Heart right ventricle (tissue), 16 donors: ENCODE measurements at regions of chr20 and their contacts with region 1.

Region 1: GRCh38 chr20:24917797-24918578 is 31.1 kb upstream of the CST7 start:
- DNase-seq: peak; percentile 51 to 66
- ATAC-seq: peak; percentile 76 to 92 (median 89)
- H3K4me3 ChIP-seq: peak overlapping the region in 1 of 10 donors; percentile 20
- H3K27ac ChIP-seq: peak overlapping the region in 1 of 10 donors; percentile 14
- H3K4me1 ChIP-seq: peaks cover 0 to 12% (median 7%) of the 10 kb centered on the region in 9 donors
- H3K27me3 ChIP-seq: peaks cover 0 to 11% (median 5%) of the 10 kb centered on the region in 7 donors
- CTCF ChIP-seq: peak; percentile 45 to 85 (median 80)

Region 2: DNA sequence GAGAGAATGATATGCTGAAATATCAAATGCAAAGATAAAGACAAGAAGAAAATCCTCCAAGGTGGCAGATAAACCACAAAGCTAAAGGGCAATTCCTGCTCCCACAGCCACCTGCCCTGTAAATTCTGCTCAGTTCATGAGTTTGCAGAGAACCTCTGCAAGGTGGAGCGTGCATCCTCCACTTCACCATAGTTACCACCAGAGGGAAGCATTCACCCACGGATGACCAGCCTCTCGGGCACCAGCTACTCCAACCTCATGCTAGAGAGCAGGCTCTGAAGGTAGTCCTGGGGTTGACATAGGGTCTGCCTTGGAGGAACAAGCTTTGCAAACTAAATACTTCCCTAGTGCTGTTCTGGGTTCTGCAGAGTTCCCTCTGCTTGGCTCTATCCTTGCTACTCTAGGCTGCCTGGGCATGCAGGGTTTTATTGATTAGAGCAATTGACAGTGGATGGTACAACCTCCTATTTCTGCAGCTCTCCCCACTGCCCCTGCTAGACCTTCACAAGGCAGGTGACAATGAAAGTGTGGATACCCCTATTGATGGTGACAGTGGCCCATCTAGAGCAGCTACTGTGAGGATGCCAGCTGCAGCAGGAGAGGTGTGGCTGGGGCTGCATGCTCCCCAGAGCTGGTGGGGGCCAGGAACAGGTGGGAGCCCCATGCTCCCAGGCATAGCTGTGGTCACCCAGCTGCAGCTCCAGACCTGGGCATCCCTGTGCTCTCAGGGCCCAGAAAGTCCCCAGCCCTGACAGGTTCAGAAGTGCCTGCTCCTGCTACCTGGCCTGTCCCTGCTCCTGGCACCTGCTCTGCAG is 980.5 kb before region 1 on chr20:
- intact Hi-C with region 1: loop called in 6 of 10 experiments (anchors 5 to 10 kb)
- DNase-seq: peak; percentile 20 to 45
- ATAC-seq: peak; percentile 88 to 97 (median 91)
- H3K4me3 ChIP-seq: no peak overlapping the region
- H3K27ac ChIP-seq: no peak overlapping the region
- H3K4me1 ChIP-seq: no peaks in the 10 kb centered on the region
- H3K27me3 ChIP-seq: peaks cover 0 to 20% (median 0%) of the 10 kb centered on the region in 7 donors
- CTCF ChIP-seq: peak; percentile 60 to 84 (median 78)

Region 3: DNA sequence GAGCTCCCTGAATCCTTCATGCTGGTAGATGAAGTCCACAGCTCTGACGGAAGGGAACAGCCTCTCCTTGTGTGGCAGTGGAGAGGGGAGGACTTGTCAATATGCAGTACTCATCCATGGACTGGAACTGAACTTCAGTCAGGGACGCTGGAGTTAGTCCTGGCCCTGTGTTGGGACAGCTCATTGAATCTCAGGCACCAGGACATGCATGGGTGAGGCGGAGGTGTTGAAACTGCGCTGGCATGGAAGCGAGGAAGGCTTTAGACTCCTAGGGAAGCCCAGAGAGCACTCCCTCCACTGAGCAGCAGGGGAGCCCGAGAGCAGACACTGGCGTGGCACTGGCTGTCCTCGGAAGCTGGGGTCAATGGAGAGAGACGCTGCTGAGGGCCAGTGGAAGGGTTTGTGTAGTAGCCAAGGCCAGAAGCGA is 768.1 kb before region 1 on chr20:
- intact Hi-C with region 1: loop called in 2 of 10 experiments (anchors 5 to 10 kb)
- DNase-seq: peak; percentile 12 to 48
- ATAC-seq: peak; percentile 50 to 92 (median 72)
- H3K4me3 ChIP-seq: no peak overlapping the region
- H3K27ac ChIP-seq: no peak overlapping the region
- H3K4me1 ChIP-seq: peaks cover 0 to 7% (median 0%) of the 10 kb centered on the region in 9 donors
- H3K27me3 ChIP-seq: no peaks in the 10 kb centered on the region
- CTCF ChIP-seq: peak in 8 of 9 donors; percentile 19 to 53 (median 48)

Region 4: GRCh38 chr20:24160563-24161375 is 757.2 kb before region 1 on chr20:
- intact Hi-C with region 1: loop called in 7 of 10 experiments (anchors 2 to 10 kb)
- DNase-seq: peak; percentile 22 to 38
- ATAC-seq: peak in 5 of 8 donors; percentile 53 to 76 (median 67)
- H3K4me3 ChIP-seq: no peak overlapping the region
- H3K27ac ChIP-seq: no peak overlapping the region
- H3K4me1 ChIP-seq: no peaks in the 10 kb centered on the region
- H3K27me3 ChIP-seq: peaks cover 0 to 6% (median 0%) of the 10 kb centered on the region in 7 donors
- CTCF ChIP-seq: peak; percentile 40 to 78 (median 72)

Region 5: GRCh38 chr20:24303381-24303780 is 614.6 kb before region 1 on chr20:
- intact Hi-C with region 1: loop called in 2 of 10 experiments (anchors 5 kb)
- DNase-seq: no peak
- ATAC-seq: no peak
- H3K4me3 ChIP-seq: no peak overlapping the region
- H3K27ac ChIP-seq: no peak overlapping the region
- H3K4me1 ChIP-seq: no peaks in the 10 kb centered on the region
- H3K27me3 ChIP-seq: peaks cover 0 to 28% (median 4%) of the 10 kb centered on the region in 7 donors
- CTCF ChIP-seq: peak in 6 of 9 donors; percentile 12 to 40 (median 28)

Region 6: GRCh38 chr20:24309596-24309995 is 608.4 kb before region 1 on chr20:
- intact Hi-C with region 1: loop called in 2 of 10 experiments (anchors 5 kb)
- DNase-seq: no peak
- ATAC-seq: no peak
- H3K4me3 ChIP-seq: no peak overlapping the region
- H3K27ac ChIP-seq: no peak overlapping the region
- H3K4me1 ChIP-seq: no peaks in the 10 kb centered on the region
- H3K27me3 ChIP-seq: peaks cover 0 to 24% (median 6%) of the 10 kb centered on the region in 7 donors
- CTCF ChIP-seq: no peak

Region 7: GRCh38 chr20:24723647-24724352 is 194.2 kb before region 1 on chr20:
- intact Hi-C with region 1: no loop called
- DNase-seq: no peak
- ATAC-seq: no peak
- H3K4me3 ChIP-seq: no peak overlapping the region
- H3K27ac ChIP-seq: no peak overlapping the region
- H3K4me1 ChIP-seq: no peaks in the 10 kb centered on the region
- H3K27me3 ChIP-seq: peaks cover 0 to 35% (median 8%) of the 10 kb centered on the region in 7 donors
- CTCF ChIP-seq: no peak